B cell (primary cell): ENCODE measurements at regions of chr2 and their contacts with region 1.

Region 1: DNA sequence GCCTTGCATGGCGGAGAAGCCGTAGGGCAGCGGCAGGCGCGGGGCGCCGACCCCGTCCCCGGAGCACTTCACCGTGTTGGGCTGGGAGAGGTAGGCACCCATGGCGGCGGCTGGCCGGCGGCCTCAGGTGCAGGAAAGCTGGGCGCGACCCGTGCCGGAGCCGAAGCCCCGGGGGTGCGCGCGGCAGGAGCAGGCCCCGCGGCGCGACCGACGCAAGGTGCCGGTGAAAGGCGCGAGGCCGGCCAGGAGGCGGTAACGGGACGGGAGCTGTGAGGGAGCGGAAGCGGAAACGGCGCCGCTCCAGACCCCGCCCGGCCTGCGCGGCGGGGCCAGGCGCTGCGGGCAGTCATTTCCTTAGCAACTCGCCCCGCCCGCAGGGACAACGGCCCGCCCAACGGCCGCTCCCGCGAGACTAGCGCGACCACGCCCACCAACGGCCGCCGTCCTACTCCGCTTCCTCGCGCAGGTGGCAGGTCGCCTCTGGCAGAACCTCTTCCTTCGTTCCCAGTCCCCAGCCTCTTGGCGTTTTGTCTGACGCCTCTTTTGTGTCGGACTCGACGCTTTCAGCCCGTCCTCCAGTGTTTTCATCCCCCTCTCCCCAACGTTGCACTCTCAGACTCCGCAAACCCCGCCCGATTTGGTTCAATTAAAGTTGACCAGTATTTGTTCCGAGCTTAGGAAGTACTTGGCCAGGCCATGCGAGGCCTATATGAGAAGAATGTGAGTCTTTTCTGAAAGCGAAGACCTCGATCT is at the start of gene PPM1G:
- DNase-seq: peak; percentile 96
- ATAC-seq: peak; percentile 97
- H3K4me3 ChIP-seq: peak within 1 kb of the TSS; percentile 28 to 96 (median 95)
- H3K4me3 Mint-ChIP-seq: peak within 1 kb of the TSS; percentile 87
- H3K27ac ChIP-seq: peak within 1 kb of the TSS; percentile 76 to 77
- H3K27ac Mint-ChIP-seq: peak within 1 kb of the TSS; percentile 90
- H3K4me1 ChIP-seq: peaks cover 15 to 20% of the 10 kb centered on the region in 2 donors
- H3K4me1 Mint-ChIP-seq: peaks cover 26% of the 10 kb centered on the region
- H3K27me3 ChIP-seq: no peaks in the 10 kb centered on the region
- H3K27me3 Mint-ChIP-seq: peaks cover 13% of the 10 kb centered on the region
- CTCF ChIP-seq: no peak
- total RNA-seq, gene PPM1G: 45.5 and 48.9 TPM in 2 replicates

Region 2: DNA sequence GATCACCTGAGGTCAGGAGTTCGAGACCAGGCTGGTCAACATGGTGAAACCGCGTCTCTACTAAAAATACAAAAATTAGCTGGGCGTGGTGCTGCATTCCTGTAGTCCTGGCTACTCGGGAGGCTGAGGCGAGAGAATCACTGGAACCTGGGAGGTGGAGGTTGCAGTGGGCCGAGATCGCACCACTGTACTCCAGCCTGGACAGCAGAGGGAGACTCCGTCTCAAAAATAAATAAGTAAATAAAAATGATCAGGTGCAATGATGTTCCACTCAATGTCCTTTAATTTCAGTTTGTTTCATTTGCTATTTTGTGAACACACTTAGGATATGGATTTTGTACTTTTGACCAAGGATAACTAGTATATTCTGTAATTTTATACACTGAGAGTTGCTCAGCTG is 1174.4 kb before region 1 on chr2:
- CTCF ChIA-PET with region 1: no interaction called
- POLR2A ChIA-PET with region 1: no interaction called
- intact Hi-C with region 1: no loop called
- DNase-seq: peak; percentile 13
- ATAC-seq: no peak
- H3K4me3 ChIP-seq: no peak overlapping the region
- H3K4me3 Mint-ChIP-seq: no peak overlapping the region
- H3K27ac ChIP-seq: no peak overlapping the region
- H3K27ac Mint-ChIP-seq: no peak overlapping the region
- H3K4me1 ChIP-seq: peaks cover 0 to under 1% of the 10 kb centered on the region in 2 donors
- H3K4me1 Mint-ChIP-seq: peaks cover 4% of the 10 kb centered on the region
- H3K27me3 ChIP-seq: no peaks in the 10 kb centered on the region
- H3K27me3 Mint-ChIP-seq: no peaks in the 10 kb centered on the region
- CTCF ChIP-seq: no peak

Region 3: GRCh38 chr2:27356382-27357181 is 52.9 kb before region 1 on chr2 and contains the start of gene GTF3C2:
- CTCF ChIA-PET with region 1: interaction called, 4 read pairs
- POLR2A ChIA-PET with region 1: no interaction called
- intact Hi-C with region 1: loop called (anchors 1 kb)
- DNase-seq: peak; percentile 98
- ATAC-seq: peak; percentile 82
- H3K4me3 ChIP-seq: peak within 1 kb of the TSS; percentile 64 to 90 (median 82)
- H3K4me3 Mint-ChIP-seq: peak within 1 kb of the TSS; percentile 97
- H3K27ac ChIP-seq: peak within 1 kb of the TSS; percentile 86 to 88
- H3K27ac Mint-ChIP-seq: peak within 1 kb of the TSS; percentile 99
- H3K4me1 ChIP-seq: peaks cover 18 to 25% of the 10 kb centered on the region in 2 donors
- H3K4me1 Mint-ChIP-seq: peaks cover 48% of the 10 kb centered on the region
- H3K27me3 ChIP-seq: no peaks in the 10 kb centered on the region
- H3K27me3 Mint-ChIP-seq: no peaks in the 10 kb centered on the region
- CTCF ChIP-seq: no peak
- total RNA-seq, gene GTF3C2: 114 and 121 TPM in 2 replicates

Region 4: GRCh38 chr2:27428213-27428977 is 18.9 kb after region 1 on chr2 and contains the start of gene NRBP1:
- CTCF ChIA-PET with region 1: interaction called, 31 read pairs
- POLR2A ChIA-PET with region 1: interaction called, 28 read pairs
- intact Hi-C with region 1: loop called (anchors 1 kb)
- DNase-seq: peak; percentile 95
- ATAC-seq: peak; percentile 92
- H3K4me3 ChIP-seq: peak within 1 kb of the TSS; percentile 68 to 98 (median 88)
- H3K4me3 Mint-ChIP-seq: peak within 1 kb of the TSS; percentile 97
- H3K27ac ChIP-seq: peak within 1 kb of the TSS; percentile 82 to 86
- H3K27ac Mint-ChIP-seq: peak within 1 kb of the TSS; percentile 97
- H3K4me1 ChIP-seq: peaks cover 15 to 21% of the 10 kb centered on the region in 2 donors
- H3K4me1 Mint-ChIP-seq: peaks cover 29% of the 10 kb centered on the region
- H3K27me3 ChIP-seq: no peaks in the 10 kb centered on the region
- H3K27me3 Mint-ChIP-seq: no peaks in the 10 kb centered on the region
- CTCF ChIP-seq: no peak
- total RNA-seq, gene NRBP1: 109 and 115 TPM in 2 replicates

Region 5: GRCh38 chr2:27628767-27629709 is 219.5 kb after region 1 on chr2 and contains the starts of genes CCDC121 and GPN1:
- CTCF ChIA-PET with region 1: no interaction called
- POLR2A ChIA-PET with region 1: interaction called, 5 read pairs
- intact Hi-C with region 1: loop called (anchors 1 kb)
- DNase-seq: peak; percentile 94
- ATAC-seq: peak; percentile 100
- H3K4me3 ChIP-seq: peak within 1 kb of the TSS; percentile 83 to 98 (median 91)
- H3K4me3 Mint-ChIP-seq: no peak within 1 kb of the TSS
- H3K27ac ChIP-seq: peak within 1 kb of the TSS; percentile 70 to 83
- H3K27ac Mint-ChIP-seq: peak within 1 kb of the TSS; percentile 51
- H3K4me1 ChIP-seq: peaks cover 10 to 17% of the 10 kb centered on the region in 2 donors
- H3K4me1 Mint-ChIP-seq: peaks cover 24% of the 10 kb centered on the region
- H3K27me3 ChIP-seq: no peaks in the 10 kb centered on the region
- H3K27me3 Mint-ChIP-seq: no peaks in the 10 kb centered on the region
- CTCF ChIP-seq: no peak
- total RNA-seq, gene CCDC121: 1.3 and 2.2 TPM in 2 replicates
- total RNA-seq, gene GPN1: 26.0 and 27.8 TPM in 2 replicates